ENCODE measurements at regions of chr1 and their contacts with region 1.

Region 1: DNA sequence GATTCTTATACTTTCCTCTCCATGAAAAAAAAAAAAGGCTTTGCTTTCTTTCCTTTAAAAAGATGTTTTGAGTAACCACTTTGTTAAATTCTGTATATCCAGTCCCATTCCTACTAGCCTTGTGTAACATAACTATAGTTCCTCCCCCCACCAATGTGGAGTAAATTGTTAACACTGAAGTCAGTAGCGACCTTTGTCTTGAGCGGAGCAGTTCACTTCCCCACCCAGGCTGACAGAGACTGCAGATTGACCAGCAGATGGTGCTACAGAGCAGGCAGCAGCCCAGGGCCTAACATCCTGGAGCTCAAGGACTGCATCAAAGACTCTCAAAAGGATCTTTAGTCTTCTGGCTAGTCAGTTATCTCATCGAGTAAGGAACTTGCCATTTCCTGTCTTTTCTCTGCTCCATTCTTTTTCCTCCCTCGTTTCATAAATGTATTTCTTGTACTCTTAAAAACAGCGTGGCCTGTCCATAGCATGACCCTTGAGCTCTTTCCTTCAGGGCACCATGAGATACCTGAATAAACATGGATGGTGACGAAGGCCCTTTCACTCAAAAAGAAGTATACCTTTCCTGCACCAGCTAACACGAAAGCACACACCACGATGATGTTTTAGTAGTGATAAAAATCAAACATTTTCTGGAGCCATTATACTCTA is 503.5 kb upstream of the PKN2 start:
- DNase-seq: peak; percentile 41 to 62 (median 43)
- ATAC-seq: peak; percentile 97
- H3K4me3 ChIP-seq: no peak overlapping the region
- H3K27ac ChIP-seq: no peak overlapping the region
- H3K4me1 ChIP-seq: no peaks in the 10 kb centered on the region
- H3K27me3 ChIP-seq: no peaks in the 10 kb centered on the region
- CTCF ChIP-seq: peak; percentile 61 to 80 (median 65)
- EP300 ChIP-seq: no peak
- POLR2A ChIP-seq: no peak
- RAD21 ChIP-seq: peak; percentile 55 to 72

Region 2: GRCh38 chr1:88595355-88596002 is 414.9 kb after region 1 on chr1:
- CTCF ChIA-PET with region 1: no interaction called
- POLR2A ChIA-PET with region 1: no interaction called
- in situ Hi-C with region 1: no loop called
- intact Hi-C with region 1: loop called (anchors 2 kb)
- DNase-seq: peak; percentile 12 to 35 (median 25)
- ATAC-seq: peak; percentile 67
- H3K4me3 ChIP-seq: no peak overlapping the region
- H3K27ac ChIP-seq: no peak overlapping the region
- H3K4me1 ChIP-seq: no peaks in the 10 kb centered on the region
- H3K27me3 ChIP-seq: no peaks in the 10 kb centered on the region
- CTCF ChIP-seq: peak; percentile 22 to 53 (median 38); a peak in 3 of 6 replicates
- EP300 ChIP-seq: no peak
- POLR2A ChIP-seq: no peak
- RAD21 ChIP-seq: peak; percentile 57 to 68

Measured in K562 (cell line).